Naive thymus-derived CD8-positive, alpha-beta T cell (primary cell): ENCODE measurements at regions of chr15 and their contacts with region 1.

Region 1: DNA sequence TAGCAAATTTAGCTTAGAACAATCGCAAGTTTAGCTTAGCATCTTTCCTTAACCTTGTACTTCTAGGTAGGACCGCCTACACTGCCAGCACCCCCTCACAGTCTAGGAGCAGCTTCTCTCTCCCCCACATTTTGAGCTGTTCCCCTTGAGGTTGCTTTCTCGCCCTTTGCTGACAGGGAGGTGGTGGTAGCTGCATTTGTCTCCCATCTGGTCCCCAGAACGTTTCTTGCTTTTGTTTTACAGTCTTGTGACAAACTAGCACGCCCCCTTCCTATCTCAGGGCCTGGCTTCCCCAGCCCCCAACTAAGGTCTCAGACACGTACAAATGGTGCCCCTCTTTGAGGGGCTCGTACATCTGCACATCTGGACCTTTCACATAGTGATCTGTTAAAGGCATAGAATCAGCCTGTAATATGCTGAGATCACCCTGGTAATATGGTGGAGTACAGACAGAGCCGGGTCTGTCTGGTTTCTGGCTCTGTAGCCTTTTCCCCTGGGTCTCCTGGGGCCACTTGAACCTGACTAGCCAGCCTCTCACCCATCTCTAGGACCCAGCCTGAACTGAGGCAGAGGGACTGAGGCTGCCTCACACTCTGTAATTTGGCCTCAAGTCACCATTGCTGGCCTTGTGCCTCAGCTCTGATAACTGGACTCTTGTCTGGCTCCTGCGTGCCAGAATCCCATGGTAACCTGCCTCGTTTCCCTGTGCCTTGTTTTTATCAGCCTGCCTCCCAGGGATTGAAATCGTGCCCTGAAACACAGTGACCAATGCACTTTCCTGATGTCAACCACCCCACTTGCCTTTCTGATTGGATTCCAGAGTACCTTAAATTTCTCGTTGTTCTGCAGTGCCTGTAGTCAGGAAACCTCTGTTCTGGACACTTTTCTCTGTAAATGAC is 27.7 kb downstream of the CRTC3 start:
- DNase-seq: peak in 4 of 10 donors; percentile 23 to 56 (median 44)
- ATAC-seq: peak; percentile 37 to 45
- H3K4me3 Mint-ChIP-seq: peak overlapping the region; percentile 23 to 81 (median 68)
- H3K27ac Mint-ChIP-seq: peak overlapping the region; percentile 77 to 93 (median 90)
- H3K4me1 Mint-ChIP-seq: peaks cover 43 to 85% (median 76%) of the 10 kb centered on the region in 4 donors
- H3K27me3 Mint-ChIP-seq: no peaks in the 10 kb centered on the region

Region 2: DNA sequence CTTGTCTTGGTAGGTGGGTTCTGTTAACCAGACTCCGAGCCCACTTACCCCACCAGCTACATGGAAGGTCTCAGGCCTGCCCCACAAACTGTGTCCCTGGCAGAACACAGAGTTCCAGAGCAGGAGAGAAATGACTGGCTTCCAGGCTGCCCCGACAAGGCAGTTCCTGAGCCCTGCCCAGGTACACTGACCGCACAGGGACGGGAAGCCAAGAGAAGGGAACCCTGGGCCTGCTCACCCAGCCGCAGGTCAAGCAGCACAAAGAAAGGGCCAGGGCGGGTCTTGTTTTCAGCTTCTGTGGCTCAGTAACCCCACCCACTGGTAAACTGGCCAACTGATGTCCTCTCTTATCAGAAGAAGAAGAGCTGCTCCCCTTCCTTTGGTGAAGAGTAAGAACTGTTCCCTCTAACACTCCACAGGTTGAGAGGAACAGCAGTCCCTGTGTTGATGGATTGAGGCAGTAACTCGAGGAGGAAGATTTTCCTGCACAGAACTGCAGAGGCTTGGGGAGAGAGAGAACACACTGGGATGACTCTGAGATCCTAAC is 40.7 kb after region 1 on chr15:
- POLR2A ChIA-PET with region 1: interaction called, 10 read pairs
- DNase-seq: no peak
- ATAC-seq: no peak
- H3K4me3 Mint-ChIP-seq: peak overlapping the region; percentile 6 to 80 (median 74)
- H3K27ac Mint-ChIP-seq: peak overlapping the region; percentile 93 to 100 (median 98)
- H3K4me1 Mint-ChIP-seq: peaks cover 50 to 82% (median 81%) of the 10 kb centered on the region in 4 donors
- H3K27me3 Mint-ChIP-seq: no peaks in the 10 kb centered on the region

Region 3: GRCh38 chr15:90610190-90610589 is 52.8 kb after region 1 on chr15:
- POLR2A ChIA-PET with region 1: no interaction called
- DNase-seq: no peak
- ATAC-seq: no peak
- H3K4me3 Mint-ChIP-seq: no peak overlapping the region
- H3K27ac Mint-ChIP-seq: peak overlapping the region in 2 of 10 donors; percentile 43
- H3K4me1 Mint-ChIP-seq: peaks cover 16 to 40% (median 28%) of the 10 kb centered on the region in 4 donors
- H3K27me3 Mint-ChIP-seq: no peaks in the 10 kb centered on the region

Region 4: DNA sequence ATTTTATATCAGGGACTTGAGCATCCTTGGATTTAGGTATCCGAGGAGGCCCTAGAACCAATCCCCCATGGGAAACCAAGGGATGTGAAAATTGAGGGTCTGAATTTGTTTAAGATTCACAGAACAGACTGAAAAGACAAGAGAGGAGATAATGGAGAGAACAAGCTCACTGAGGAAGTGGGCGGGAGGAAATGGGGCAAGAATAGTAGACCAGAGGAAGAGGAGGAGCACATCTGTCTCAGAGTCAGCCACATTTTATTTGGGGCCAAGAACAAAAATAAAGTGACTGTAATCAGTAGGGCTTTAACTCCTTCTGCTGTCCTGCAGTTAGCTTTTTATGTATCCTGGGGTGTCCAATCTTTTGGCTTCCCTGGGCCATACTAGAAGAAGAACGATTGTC is 223.5 kb after region 1 on chr15:
- POLR2A ChIA-PET with region 1: interaction called, 11 read pairs
- DNase-seq: peak in 3 of 10 donors; percentile 6 to 26 (median 16)
- ATAC-seq: peak in 1 of 2 donors; percentile 70
- H3K4me3 Mint-ChIP-seq: peak overlapping the region in 9 of 10 donors; percentile 16 to 77 (median 55)
- H3K27ac Mint-ChIP-seq: peak overlapping the region; percentile 3 to 73 (median 47)
- H3K4me1 Mint-ChIP-seq: peaks cover 4 to 24% (median 19%) of the 10 kb centered on the region in 4 donors
- H3K27me3 Mint-ChIP-seq: no peaks in the 10 kb centered on the region